ENCODE measurements at regions of chr1 and their contacts with region 1.

Region 1: GRCh38 chr1:5286244-5286643 is 631.8 kb downstream of the AJAP1 start:
- DNase-seq: peak; percentile 60
- ATAC-seq: no peak
- H3K4me3 Mint-ChIP-seq: no peak overlapping the region
- H3K27ac Mint-ChIP-seq: no peak overlapping the region
- H3K4me1 Mint-ChIP-seq: no peaks in the 10 kb centered on the region
- H3K27me3 Mint-ChIP-seq: no peaks in the 10 kb centered on the region

Region 2: GRCh38 chr1:4935807-4936206 is 350.4 kb before region 1 on chr1:
- CTCF ChIA-PET with region 1: no interaction called
- DNase-seq: no peak
- ATAC-seq: no peak
- H3K4me3 Mint-ChIP-seq: no peak overlapping the region
- H3K27ac Mint-ChIP-seq: no peak overlapping the region
- H3K4me1 Mint-ChIP-seq: no peaks in the 10 kb centered on the region
- H3K27me3 Mint-ChIP-seq: no peaks in the 10 kb centered on the region

Region 3: DNA sequence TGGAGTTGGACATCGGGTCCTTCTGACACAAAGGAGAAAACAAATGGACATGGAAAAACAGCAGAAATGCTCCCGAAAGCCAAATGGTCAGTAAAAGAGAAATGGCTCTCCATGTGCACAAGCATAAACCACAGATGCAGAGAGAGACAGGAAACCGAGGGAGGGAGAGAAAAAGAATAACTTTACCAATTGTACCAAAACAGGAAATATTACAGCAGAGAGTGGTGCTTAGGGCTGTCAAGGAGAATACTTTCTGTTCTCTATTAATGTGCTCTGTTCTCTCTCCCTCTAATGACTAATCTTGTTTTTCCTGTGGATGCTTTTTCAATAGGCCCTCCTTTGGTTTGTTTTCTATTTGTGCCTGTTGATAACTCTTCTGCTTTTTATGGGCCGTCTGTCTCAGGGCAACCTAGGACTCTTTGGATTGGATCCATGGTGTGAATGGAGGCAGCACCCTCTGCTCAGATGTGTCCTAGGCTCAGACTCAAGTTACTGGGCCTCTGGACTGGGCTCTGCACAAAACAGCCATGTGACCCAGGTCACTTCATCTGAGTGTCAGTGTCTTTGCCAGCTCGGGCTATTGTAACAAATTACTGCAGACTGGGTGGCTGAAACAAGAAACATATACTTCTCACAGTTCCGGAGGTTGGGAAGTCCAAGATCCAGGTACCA is 43.0 kb after region 1 on chr1:
- CTCF ChIA-PET with region 1: no interaction called
- DNase-seq: no peak
- ATAC-seq: peak; percentile 30
- H3K4me3 Mint-ChIP-seq: no peak overlapping the region
- H3K27ac Mint-ChIP-seq: peak overlapping the region; percentile 75
- H3K4me1 Mint-ChIP-seq: peaks cover 15% of the 10 kb centered on the region
- H3K27me3 Mint-ChIP-seq: no peaks in the 10 kb centered on the region

Region 4: GRCh38 chr1:5481889-5482288 is 195.6 kb after region 1 on chr1:
- CTCF ChIA-PET with region 1: interaction called, 12 read pairs
- DNase-seq: peak; percentile 62
- ATAC-seq: peak; percentile 67
- H3K4me3 Mint-ChIP-seq: no peak overlapping the region
- H3K27ac Mint-ChIP-seq: no peak overlapping the region
- H3K4me1 Mint-ChIP-seq: peaks cover 3% of the 10 kb centered on the region
- H3K27me3 Mint-ChIP-seq: no peaks in the 10 kb centered on the region